ENCODE measurements at regions of chr4 and their contacts with region 1.

Region 1: DNA sequence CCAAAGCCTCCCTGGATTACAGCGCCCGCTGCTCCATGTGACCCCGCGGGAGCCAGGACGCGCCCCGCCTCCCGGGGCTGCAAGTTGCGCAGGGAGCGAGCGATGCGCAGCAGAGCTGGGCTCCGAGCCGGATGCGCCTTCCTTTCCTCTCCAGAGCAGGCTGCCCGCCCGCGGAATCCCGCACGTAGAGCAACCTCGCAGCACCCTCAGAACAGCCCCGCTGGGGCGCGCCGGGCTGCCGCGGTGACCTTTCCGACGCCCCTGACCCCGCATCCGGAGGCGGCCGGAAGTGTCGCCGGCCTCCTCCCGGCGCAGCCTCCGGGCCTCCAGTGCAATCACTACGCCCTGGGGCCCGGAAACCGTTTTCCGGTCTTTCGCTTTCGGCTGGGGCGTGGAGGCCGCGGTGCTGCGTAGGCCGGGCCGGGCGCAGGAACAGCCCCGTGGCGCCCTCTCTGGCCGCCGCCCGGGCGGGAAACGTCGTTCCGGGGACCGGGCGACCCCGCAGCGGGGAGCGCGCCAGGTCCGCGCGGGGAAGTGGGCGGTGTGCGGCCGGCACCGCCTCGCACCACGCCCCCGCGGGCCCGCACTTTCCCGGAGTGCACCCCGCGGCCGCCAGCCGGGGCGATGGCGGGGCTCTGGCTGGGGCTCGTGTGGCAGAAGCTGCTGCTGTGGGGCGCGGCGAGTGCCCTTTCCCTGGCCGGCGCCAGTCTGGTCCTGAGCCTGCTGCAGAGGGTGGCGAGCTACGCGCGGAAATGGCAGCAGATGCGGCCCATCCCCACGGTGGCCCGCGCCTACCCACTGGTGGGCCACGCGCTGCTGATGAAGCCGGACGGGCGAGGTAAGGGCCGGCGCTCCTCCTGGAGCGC is at the start of gene CYP4V2:
- DNase-seq: no peak
- H3K4me3 ChIP-seq: peak within 1 kb of the TSS; percentile 69 to 92 (median 80)
- H3K27ac ChIP-seq: peak within 1 kb of the TSS; percentile 92 to 98 (median 96)
- H3K4me1 ChIP-seq: peaks cover 24 to 39% (median 35%) of the 10 kb centered on the region in 4 donors
- H3K27me3 ChIP-seq: no peaks in the 10 kb centered on the region
- CTCF ChIP-seq: peak; percentile 24 to 43 (median 32)
- EP300 ChIP-seq: no peak
- POLR2A ChIP-seq: peak; percentile 15
- total RNA-seq, gene CYP4V2: 27.5 to 43.1 (median 35.5) TPM

Region 2: GRCh38 chr4:186067757-186068385 is 123.6 kb before region 1 on chr4:
- intact Hi-C with region 1: loop called (anchors 5 kb)
- DNase-seq: no peak
- H3K4me3 ChIP-seq: peak overlapping the region; percentile 54 to 65 (median 62)
- H3K27ac ChIP-seq: peak overlapping the region; percentile 69 to 72 (median 71)
- H3K4me1 ChIP-seq: peaks cover 6 to 18% (median 14%) of the 10 kb centered on the region in 4 donors
- H3K27me3 ChIP-seq: no peaks in the 10 kb centered on the region
- CTCF ChIP-seq: peak; percentile 61 to 68 (median 61)
- EP300 ChIP-seq: no peak
- POLR2A ChIP-seq: no peak

Region 3: DNA sequence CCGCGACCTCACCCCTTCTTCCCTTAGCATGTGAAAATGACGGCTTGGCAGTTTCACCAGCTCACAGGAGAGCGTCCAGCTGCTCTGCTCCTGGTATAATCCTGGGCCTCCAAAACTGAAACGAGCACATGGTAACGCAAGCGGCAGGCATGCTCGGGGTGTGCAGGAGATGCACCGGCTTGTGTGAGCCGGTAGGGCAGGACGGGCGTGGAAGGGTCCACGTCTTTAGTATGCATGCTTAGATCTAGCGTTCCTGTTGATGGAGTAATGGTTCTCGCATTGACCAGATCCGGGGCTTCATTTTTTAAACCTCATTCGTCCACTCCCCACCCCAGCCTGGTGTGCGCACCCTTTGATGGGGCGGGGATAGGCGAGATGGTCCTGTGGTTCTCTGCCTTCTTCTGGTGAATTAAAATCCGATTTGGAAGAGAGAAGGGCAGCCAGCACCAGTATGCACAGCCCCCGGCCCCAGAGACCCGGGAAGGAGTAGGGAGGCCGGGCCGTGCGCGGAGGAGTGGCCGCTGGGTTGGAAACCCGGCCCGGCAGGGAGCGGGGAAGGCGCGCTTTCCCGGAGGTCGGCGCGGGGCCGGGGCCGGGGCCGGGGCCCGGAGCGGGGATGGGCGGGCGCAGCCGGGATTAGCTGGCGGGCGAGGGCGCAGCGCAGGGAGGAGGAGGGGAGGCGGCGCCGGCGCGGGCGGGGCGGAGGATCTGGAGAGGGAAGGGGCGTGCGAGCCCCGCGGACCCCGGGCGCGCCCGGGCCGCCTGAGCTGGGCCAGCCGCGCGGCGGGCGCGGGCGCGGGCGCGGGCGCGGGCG is 47.1 kb before region 1 on chr4:
- intact Hi-C with region 1: loop called (anchors 5 kb)
- DNase-seq: no peak
- H3K4me3 ChIP-seq: peak overlapping the region; percentile 64 to 82 (median 66)
- H3K27ac ChIP-seq: peak overlapping the region; percentile 79 to 89 (median 88)
- H3K4me1 ChIP-seq: peaks cover 10 to 22% (median 16%) of the 10 kb centered on the region in 4 donors
- H3K27me3 ChIP-seq: no peaks in the 10 kb centered on the region
- CTCF ChIP-seq: peak in 1 of 3 experiments; percentile 45
- EP300 ChIP-seq: no peak
- POLR2A ChIP-seq: no peak

Region 4: GRCh38 chr4:186318481-186318880 is 127.0 kb after region 1 on chr4:
- intact Hi-C with region 1: no loop called
- DNase-seq: no peak
- H3K4me3 ChIP-seq: no peak overlapping the region
- H3K27ac ChIP-seq: no peak overlapping the region
- H3K4me1 ChIP-seq: no peaks in the 10 kb centered on the region
- H3K27me3 ChIP-seq: peaks cover 0 to 6% (median 0%) of the 10 kb centered on the region in 4 donors
- CTCF ChIP-seq: no peak
- EP300 ChIP-seq: no peak
- POLR2A ChIP-seq: no peak

Measured in esophagus muscularis mucosa (tissue), 4 donors.